H1 (cell line): ENCODE measurements at regions of chr22 and their contacts with region 1.

Region 1: GRCh38 chr22:29300807-29301601 is 5.4 kb upstream of the GAS2L1 start:
- DNase-seq: peak in 1 of 2 experiments; percentile 52
- H3K4me3 ChIP-seq: no peak overlapping the region
- H3K27ac ChIP-seq: no peak overlapping the region
- H3K4me1 ChIP-seq: peaks cover 0 to 6% (median 1%) of the 10 kb centered on the region in 4 experiments; a peak in 3 of 7 replicates
- H3K27me3 ChIP-seq: no peaks in the 10 kb centered on the region
- CTCF ChIP-seq: no peak
- EP300 ChIP-seq: no peak
- POLR2A ChIP-seq: peak in 1 of 2 experiments; percentile 84; a peak in 2 of 3 replicates
- RAD21 ChIP-seq: no peak

Region 2: GRCh38 chr22:29275819-29276565 is 25.0 kb before region 1 on chr22:
- CTCF ChIA-PET with region 1: interaction called, 3 read pairs
- POLR2A ChIA-PET with region 1: interaction called, 436 read pairs
- DNase-seq: no peak
- H3K4me3 ChIP-seq: no peak overlapping the region
- H3K27ac ChIP-seq: no peak overlapping the region
- H3K4me1 ChIP-seq: peaks cover 0 to 4% (median 0%) of the 10 kb centered on the region in 4 experiments; a peak in 2 of 7 replicates
- H3K27me3 ChIP-seq: no peaks in the 10 kb centered on the region
- CTCF ChIP-seq: no peak
- EP300 ChIP-seq: no peak
- POLR2A ChIP-seq: no peak
- RAD21 ChIP-seq: no peak

Region 3: GRCh38 chr22:29284196-29284595 is 16.8 kb before region 1 on chr22:
- CTCF ChIA-PET with region 1: interaction called, 6 read pairs
- POLR2A ChIA-PET with region 1: interaction called, 436 read pairs
- DNase-seq: no peak
- H3K4me3 ChIP-seq: no peak overlapping the region
- H3K27ac ChIP-seq: no peak overlapping the region
- H3K4me1 ChIP-seq: no peaks in the 10 kb centered on the region
- H3K27me3 ChIP-seq: no peaks in the 10 kb centered on the region
- CTCF ChIP-seq: no peak
- EP300 ChIP-seq: no peak
- POLR2A ChIP-seq: no peak
- RAD21 ChIP-seq: no peak

Region 4: GRCh38 chr22:29320546-29320945 is 19.5 kb after region 1 on chr22:
- CTCF ChIA-PET with region 1: interaction called, 10 read pairs
- POLR2A ChIA-PET with region 1: interaction called, 17 read pairs
- DNase-seq: no peak
- H3K4me3 ChIP-seq: no peak overlapping the region
- H3K27ac ChIP-seq: no peak overlapping the region
- H3K4me1 ChIP-seq: no peaks in the 10 kb centered on the region; a peak in 2 of 7 replicates
- H3K27me3 ChIP-seq: peaks cover 6 to 17% (median 16%) of the 10 kb centered on the region in 4 experiments
- CTCF ChIP-seq: peak in 1 of 3 experiments; percentile 5; a peak in 1 of 4 replicates
- EP300 ChIP-seq: no peak
- POLR2A ChIP-seq: no peak
- RAD21 ChIP-seq: no peak